Left cardiac atrium (tissue), 4 donors: ENCODE measurements at regions of chr3 and their contacts with region 1.

Region 1: DNA sequence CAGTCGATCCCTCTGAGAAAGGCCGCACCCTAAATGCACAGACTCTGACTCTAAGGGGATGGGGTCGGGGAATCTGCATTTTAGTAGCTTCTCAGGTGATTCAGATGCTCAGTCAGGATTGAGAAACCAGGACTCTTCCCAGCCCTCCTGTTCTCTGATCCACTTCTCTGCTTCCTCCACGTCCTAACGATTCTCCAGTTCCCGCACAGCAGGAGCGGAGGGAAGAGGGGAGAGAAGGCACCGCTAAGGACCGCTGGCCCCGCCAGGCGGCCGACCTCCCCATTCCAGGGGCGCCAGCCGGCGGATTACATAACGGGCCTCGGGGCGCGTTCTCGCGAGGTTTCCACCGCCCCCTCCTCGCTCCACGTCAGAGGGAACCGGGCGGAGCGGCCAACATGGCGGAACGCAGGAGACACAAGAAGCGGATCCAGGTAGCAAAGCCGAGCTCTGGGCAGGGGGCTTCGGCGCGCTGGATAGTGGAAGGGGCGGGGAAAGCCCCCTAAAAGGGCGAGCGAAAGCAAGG is at the start of gene SEC62:
- DNase-seq: peak; percentile 96
- ATAC-seq: peak; percentile 99
- total RNA-seq, gene SEC62: 94.4 to 101 TPM

Region 2: GRCh38 chr3:169764452-169765274 is 201.8 kb before region 1 on chr3 and contains the start of gene TERC:
- intact Hi-C with region 1: loop called in 1 of 2 experiments (anchors 5 kb)
- DNase-seq: peak; percentile 94
- ATAC-seq: peak; percentile 96 to 97
- total RNA-seq, gene TERC: 1.7 to 7.2 TPM

Region 3: DNA sequence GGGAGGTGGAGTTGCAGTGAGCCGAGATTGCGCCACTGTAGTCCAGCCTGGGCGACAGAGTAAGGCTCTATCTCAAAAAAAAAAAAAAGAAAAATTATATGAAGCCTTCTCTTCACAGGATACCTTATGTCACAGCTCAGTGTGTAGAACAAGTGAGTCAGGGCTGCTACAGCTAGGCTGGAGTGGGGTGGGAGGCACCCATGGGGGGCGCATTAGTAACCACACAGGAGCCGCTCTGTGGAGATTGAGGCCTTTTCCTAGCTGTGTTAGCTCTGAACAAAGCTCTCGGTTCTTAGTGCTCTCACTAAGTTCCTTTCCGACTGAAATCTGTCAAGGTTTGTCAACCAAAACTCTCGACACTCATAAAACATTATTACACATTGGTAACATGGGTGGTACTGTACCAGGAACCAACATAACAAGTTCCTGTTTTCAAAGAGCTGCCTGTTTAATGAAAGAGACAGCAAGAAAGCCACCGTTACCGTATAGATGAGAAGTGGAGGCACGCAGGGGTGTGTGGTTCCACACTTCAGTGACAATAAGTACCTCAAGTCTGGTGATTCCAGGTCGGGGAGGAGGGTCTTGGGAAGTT is 101.2 kb before region 1 on chr3:
- intact Hi-C with region 1: loop called in 1 of 2 experiments (anchors 2 kb)
- DNase-seq: no peak
- ATAC-seq: no peak